OCI-LY7 (cell line): ENCODE measurements at regions of chr6 and their contacts with region 1.

Region 1: GRCh38 chr6:109382576-109383437 is 540 bp upstream of the CD164 start:
- DNase-seq: peak; percentile 97
- H3K4me3 ChIP-seq: peak overlapping the region; percentile 91
- H3K27ac ChIP-seq: peak overlapping the region; percentile 85
- H3K4me1 ChIP-seq: peaks cover 28% of the 10 kb centered on the region
- CTCF ChIP-seq: peak; percentile 90

Region 2: GRCh38 chr6:109082188-109082577 is 300.6 kb before region 1 on chr6:
- CTCF ChIA-PET with region 1: no interaction called
- POLR2A ChIA-PET with region 1: interaction called, 4 read pairs
- intact Hi-C with region 1: loop called (anchors 2 kb)
- DNase-seq: peak; percentile 64
- H3K4me3 ChIP-seq: no peak overlapping the region
- H3K27ac ChIP-seq: peak overlapping the region; percentile 86
- H3K4me1 ChIP-seq: peaks cover 75% of the 10 kb centered on the region
- CTCF ChIP-seq: peak; percentile 50; the same call in 1 of the 2 replicates

Region 3: DNA sequence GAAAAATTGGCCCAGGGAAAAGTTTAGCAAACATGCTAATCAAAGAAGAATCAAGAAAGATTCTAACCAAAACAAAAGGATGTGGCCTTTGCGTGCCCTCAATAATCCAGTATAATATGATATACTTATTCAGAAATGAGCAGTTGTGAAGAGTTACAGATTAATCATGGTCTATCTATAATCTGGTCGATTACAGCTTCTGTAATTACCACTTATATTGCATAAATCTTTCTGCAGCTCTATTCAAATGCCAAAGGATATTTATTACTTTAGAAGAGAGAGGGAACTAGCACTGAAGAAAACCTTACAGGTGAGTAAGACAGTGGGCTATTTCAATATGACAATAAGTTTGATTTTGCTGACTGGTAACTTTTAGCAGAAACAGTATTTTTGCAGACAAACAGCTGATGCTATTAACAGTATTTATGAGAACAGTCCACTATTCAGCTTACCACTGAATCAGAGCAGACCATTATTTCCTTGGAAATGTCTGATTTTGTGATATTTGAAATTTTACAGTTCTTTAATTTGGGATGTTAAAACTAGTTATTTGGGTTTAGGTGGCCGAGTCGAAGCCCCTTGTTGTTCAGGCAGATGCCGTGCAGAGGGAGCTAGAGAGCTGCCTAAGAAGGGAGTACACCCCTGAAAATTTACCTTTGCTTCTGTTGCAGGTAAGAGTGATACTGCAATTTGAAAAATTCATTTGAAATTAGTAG is 195.2 kb before region 1 on chr6:
- CTCF ChIA-PET with region 1: interaction called, 10 read pairs
- POLR2A ChIA-PET with region 1: interaction called, 11 read pairs
- intact Hi-C with region 1: loop called (anchors 1 kb)
- DNase-seq: peak; percentile 65
- H3K4me3 ChIP-seq: no peak overlapping the region
- H3K27ac ChIP-seq: no peak overlapping the region
- H3K4me1 ChIP-seq: peaks cover 12% of the 10 kb centered on the region
- CTCF ChIP-seq: peak; percentile 98

Region 4: DNA sequence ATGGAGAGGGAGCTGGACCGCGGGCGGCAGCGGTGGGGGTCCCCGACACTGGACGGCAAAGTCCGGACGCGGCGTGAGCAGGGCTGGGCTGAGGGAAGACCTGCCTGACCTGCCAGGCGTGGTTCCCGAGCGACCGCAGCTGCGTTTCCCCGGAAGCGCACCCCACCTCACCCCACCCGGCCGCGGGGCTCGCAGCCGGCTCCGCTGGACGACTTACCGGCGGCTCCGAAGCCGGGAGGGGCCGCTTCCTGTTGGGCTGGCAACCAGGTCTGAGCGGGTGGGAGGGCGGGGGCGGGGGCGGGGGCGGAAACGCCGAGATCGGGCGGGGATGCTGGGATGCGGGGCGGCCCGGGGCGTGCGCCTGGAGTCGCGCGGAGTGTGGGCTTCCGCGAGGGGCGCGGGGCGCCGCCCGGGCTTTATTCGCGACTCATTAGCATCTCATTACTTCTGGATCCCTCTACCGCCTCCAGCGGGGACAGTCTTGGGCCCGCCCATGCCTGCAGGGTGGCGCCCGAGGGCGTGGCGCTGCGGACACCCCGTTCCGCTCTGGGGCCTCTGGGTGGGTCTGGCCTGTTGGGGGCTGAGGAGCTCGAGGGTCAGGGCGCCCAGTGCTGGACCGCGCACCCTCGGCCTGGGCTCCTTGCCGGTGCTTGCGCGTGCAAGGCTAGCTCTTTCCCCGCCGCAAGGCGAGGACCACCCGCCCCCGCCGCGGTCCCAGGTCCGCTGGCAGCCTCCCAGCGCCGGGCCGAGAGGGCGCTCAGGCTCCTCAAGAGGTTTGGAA is 72.9 kb after region 1 on chr6 and contains the start of gene MICAL1:
- CTCF ChIA-PET with region 1: interaction called, 3 read pairs
- POLR2A ChIA-PET with region 1: interaction called, 6 read pairs
- intact Hi-C with region 1: loop called (anchors 1 kb)
- DNase-seq: peak; percentile 93
- H3K4me3 ChIP-seq: peak within 1 kb of the TSS; percentile 82
- H3K27ac ChIP-seq: peak within 1 kb of the TSS; percentile 99
- H3K4me1 ChIP-seq: peaks cover 82% of the 10 kb centered on the region
- CTCF ChIP-seq: peak; percentile 44; the same call in 1 of the 2 replicates
- total RNA-seq, gene MICAL1: 69.2 and 79.5 TPM in 2 replicates

Region 5: GRCh38 chr6:109690737-109691621 is 308.2 kb after region 1 on chr6 and contains the starts of genes AK9 and FIG4:
- CTCF ChIA-PET with region 1: no interaction called
- POLR2A ChIA-PET with region 1: no interaction called
- intact Hi-C with region 1: loop called (anchors 5 kb)
- DNase-seq: peak; percentile 92
- H3K4me3 ChIP-seq: peak within 1 kb of the TSS; percentile 93
- H3K27ac ChIP-seq: peak within 1 kb of the TSS; percentile 31
- H3K4me1 ChIP-seq: peaks cover 27% of the 10 kb centered on the region
- CTCF ChIP-seq: peak; percentile 57
- total RNA-seq, gene AK9: 2.0 and 6.7 TPM in 2 replicates
- total RNA-seq, gene FIG4: 10.4 and 13.3 TPM in 2 replicates